ENCODE measurements at regions of chr12 and their contacts with region 1.

Region 1: DNA sequence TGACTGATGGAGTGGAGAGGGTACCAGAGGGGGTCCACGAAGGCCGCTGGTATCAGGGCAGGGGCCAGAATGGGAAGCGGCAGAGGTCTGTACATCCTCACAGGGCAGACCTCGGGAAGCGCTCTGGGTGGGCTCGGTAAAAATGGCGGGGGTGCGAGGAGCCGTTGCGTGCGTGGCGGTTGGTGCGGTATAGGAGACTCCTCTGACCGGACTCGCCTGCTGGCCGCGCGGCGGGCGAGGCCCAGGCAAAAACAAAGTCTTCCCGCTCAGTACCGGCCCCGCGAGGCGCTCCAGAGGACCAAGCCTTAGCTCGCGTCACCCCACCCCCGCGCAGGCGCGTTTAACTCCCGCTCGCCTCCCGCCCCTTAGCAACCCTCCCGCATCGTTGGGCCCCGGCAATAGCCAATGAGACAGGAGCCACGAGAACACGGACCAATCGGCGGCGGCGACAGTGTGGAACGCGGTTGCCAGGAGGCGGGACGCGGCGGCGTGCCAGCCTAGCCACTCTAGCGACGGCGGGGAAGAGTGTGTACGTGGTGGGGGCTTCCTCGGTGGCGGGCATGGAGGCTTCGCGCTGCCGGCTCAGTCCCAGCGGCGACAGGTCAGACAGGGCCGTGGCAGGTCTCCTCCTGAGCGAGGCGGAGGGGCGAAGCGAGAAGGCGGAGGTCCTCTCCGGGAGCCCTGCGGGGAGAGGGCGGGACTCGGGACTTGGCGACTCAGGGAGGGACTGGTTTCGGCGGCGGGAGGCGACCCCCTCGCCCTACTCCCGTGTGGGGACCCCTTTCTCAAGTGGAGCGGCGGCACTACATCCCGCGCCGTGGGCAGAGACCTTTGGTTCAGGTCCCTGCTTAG is at the start of gene TULP3:
- DNase-seq: peak; percentile 95
- ATAC-seq: peak; percentile 87
- H3K4me3 ChIP-seq: peak within 1 kb of the TSS; percentile 99
- H3K27ac ChIP-seq: peak within 1 kb of the TSS; percentile 59
- H3K4me1 ChIP-seq: peaks cover 21% of the 10 kb centered on the region
- H3K27me3 ChIP-seq: no peaks in the 10 kb centered on the region
- CTCF ChIP-seq: no peak
- total RNA-seq, gene TULP3: 19.8 and 22.6 TPM in 2 replicates

Region 2: GRCh38 chr12:2267703-2268501 is 622.7 kb before region 1 on chr12:
- CTCF ChIA-PET with region 1: no interaction called
- POLR2A ChIA-PET with region 1: no interaction called
- intact Hi-C with region 1: no loop called
- DNase-seq: no peak
- ATAC-seq: no peak
- H3K4me3 ChIP-seq: no peak overlapping the region
- H3K27ac ChIP-seq: no peak overlapping the region
- H3K4me1 ChIP-seq: no peaks in the 10 kb centered on the region
- H3K27me3 ChIP-seq: peaks cover 60% of the 10 kb centered on the region
- CTCF ChIP-seq: no peak

Region 3: GRCh38 chr12:2877047-2877952 is 13.3 kb before region 1 on chr12 and contains the starts of genes FOXM1 and RHNO1:
- CTCF ChIA-PET with region 1: no interaction called
- POLR2A ChIA-PET with region 1: no interaction called
- intact Hi-C with region 1: loop called (anchors 2 kb)
- DNase-seq: peak; percentile 85
- ATAC-seq: peak; percentile 84
- H3K4me3 ChIP-seq: peak within 1 kb of the TSS; percentile 72
- H3K27ac ChIP-seq: peak within 1 kb of the TSS; percentile 70
- H3K4me1 ChIP-seq: peaks cover 13% of the 10 kb centered on the region
- H3K27me3 ChIP-seq: no peaks in the 10 kb centered on the region
- CTCF ChIP-seq: no peak
- total RNA-seq, gene FOXM1: 71.4 and 88.6 TPM in 2 replicates
- total RNA-seq, gene RHNO1: 42.0 and 43.3 TPM in 2 replicates

Measured in PC-3 (cell line).